ENCODE measurements at regions of chr7 and their contacts with region 1.

Region 1: GRCh38 chr7:28096713-28097112 is 83.9 kb downstream of the JAZF1 start:
- DNase-seq: peak; percentile 66
- H3K4me3 ChIP-seq: no peak overlapping the region
- H3K27ac ChIP-seq: no peak overlapping the region
- H3K4me1 ChIP-seq: no peaks in the 10 kb centered on the region
- H3K27me3 ChIP-seq: no peaks in the 10 kb centered on the region
- CTCF ChIP-seq: peak; percentile 56 to 85 (median 80)
- POLR2A ChIP-seq: no peak

Region 2: GRCh38 chr7:27196287-27196767 is 900.4 kb before region 1 on chr7:
- intact Hi-C with region 1: loop called (anchors 5 kb)
- DNase-seq: peak; percentile 95
- H3K4me3 ChIP-seq: peak overlapping the region; percentile 76 to 81
- H3K27ac ChIP-seq: peak overlapping the region; percentile 96 to 97
- H3K4me1 ChIP-seq: no peaks in the 10 kb centered on the region
- H3K27me3 ChIP-seq: no peaks in the 10 kb centered on the region
- CTCF ChIP-seq: peak; percentile 80 to 87 (median 84)
- POLR2A ChIP-seq: no peak

Region 3: DNA sequence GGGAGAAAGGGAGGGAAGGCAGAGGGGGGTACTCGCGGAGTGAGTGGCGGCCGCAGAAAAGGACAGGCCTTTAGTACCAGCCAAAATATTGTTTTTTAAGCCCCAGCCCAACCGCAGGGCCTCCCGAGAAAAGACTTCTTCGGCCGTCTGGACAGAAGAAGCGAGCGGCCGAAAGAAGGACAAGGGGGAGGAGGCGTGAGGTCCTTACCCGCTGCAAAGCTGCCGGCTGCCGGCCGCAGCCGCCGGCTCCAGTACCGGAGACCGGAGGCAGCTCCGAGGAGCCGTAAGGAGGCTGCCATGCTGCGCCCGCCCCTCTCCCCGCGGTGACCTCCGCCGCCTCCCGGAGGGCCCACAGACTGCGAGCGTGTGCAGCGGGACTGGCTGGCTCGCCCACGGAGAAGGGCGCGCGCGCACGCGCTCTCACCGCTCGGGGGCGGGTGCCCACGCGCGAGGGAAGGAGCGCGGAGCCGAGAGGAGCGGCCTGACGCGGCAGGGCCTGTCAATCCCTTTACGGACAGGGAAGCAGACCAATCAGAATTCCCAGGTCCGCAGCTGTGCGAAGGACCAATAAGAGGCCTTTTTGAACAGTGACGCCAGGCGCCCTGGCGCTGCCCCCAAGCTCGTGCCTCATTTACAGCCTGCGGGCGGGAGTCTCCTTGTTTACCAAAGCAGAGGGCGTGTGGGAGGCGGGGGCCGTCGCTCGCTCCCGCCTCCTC is 434.1 kb before region 1 on chr7 and contains the start of gene HIBADH:
- intact Hi-C with region 1: loop called (anchors 5 kb)
- DNase-seq: peak; percentile 99
- H3K4me3 ChIP-seq: peak within 1 kb of the TSS; percentile 83 to 94
- H3K27ac ChIP-seq: peak within 1 kb of the TSS; percentile 95 to 97
- H3K4me1 ChIP-seq: no peaks in the 10 kb centered on the region
- H3K27me3 ChIP-seq: no peaks in the 10 kb centered on the region
- CTCF ChIP-seq: peak in 3 of 4 experiments; percentile 20 to 61 (median 58)
- POLR2A ChIP-seq: peak; percentile 99
- total RNA-seq, gene HIBADH: 78.2 to 80.5 TPM

Region 4: GRCh38 chr7:27784393-27785053 is 312.2 kb before region 1 on chr7:
- intact Hi-C with region 1: loop called (anchors 10 kb)
- DNase-seq: no peak
- H3K4me3 ChIP-seq: no peak overlapping the region
- H3K27ac ChIP-seq: no peak overlapping the region
- H3K4me1 ChIP-seq: no peaks in the 10 kb centered on the region
- H3K27me3 ChIP-seq: no peaks in the 10 kb centered on the region
- CTCF ChIP-seq: peak in 3 of 4 experiments; percentile 43 to 52 (median 45)
- POLR2A ChIP-seq: no peak

Region 5: DNA sequence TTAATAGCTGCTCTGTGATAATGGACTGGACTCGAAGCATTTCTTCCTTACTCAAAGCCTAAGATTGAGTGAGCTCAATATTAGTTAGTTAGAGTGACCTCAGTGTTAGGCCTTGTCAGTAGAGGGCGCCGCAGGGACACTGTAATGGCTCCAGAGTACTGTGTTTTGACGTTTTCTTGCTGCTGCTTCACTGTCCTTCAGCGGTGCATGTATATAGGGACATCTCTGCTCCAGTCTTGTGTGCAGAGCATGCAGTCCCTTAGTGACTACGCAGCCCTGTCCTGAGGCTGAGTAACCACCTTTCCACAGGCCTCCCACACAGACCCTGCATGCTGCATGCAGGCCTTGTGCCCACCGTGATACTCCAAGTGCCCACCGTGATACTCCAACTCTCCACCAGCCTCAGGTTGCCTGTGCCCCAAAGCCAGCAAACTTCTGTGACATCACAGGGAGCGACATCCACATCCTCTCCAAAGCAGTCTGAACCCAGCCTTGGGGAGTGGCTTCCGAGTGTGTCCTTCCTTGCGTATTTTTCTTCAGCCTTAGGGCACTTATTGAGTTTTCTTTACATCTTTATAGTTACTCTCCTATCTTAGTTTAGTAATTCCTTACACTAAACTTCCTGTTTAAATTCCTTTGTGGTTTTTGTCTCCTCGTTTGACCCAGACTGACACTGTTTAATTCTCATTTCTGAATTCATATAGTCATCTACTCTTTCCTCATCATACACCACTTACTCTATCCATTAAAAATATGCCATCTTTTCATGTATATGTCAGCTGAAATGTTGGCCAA is 34.3 kb before region 1 on chr7:
- intact Hi-C with region 1: loop called (anchors 5 kb)
- DNase-seq: peak; percentile 40
- H3K4me3 ChIP-seq: no peak overlapping the region
- H3K27ac ChIP-seq: no peak overlapping the region
- H3K4me1 ChIP-seq: no peaks in the 10 kb centered on the region
- H3K27me3 ChIP-seq: no peaks in the 10 kb centered on the region
- CTCF ChIP-seq: peak in 3 of 4 experiments; percentile 36 to 52 (median 45)
- POLR2A ChIP-seq: no peak